ENCODE measurements at regions of chr3 and their contacts with region 1.

Region 1: DNA sequence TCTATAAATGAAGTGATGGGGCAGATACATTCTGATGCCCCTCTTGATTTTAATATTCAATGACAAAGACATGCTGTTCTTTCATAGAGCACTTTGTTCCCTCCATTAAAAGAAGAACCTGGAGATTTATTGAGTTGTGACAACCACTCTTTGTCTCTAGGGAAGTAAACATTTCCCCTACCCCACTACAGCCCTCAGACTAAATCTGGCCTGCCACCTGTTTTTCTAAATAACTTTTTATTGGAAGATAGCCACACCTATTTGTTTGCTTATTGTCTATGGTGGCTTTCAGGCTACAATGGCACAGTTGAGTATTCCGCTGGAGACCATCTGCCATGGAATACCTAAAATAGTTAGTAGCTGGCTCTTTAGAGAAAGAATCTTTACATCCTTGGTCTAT is 41.2 kb upstream of the ZNF385D start:
- DNase-seq: no peak
- ATAC-seq: no peak
- H3K4me3 ChIP-seq: no peak overlapping the region
- H3K27ac ChIP-seq: peak overlapping the region in 1 of 2 donors; percentile 57
- H3K4me1 ChIP-seq: peaks cover 2 to 5% of the 10 kb centered on the region in 2 donors
- H3K27me3 ChIP-seq: no peaks in the 10 kb centered on the region

Region 2: DNA sequence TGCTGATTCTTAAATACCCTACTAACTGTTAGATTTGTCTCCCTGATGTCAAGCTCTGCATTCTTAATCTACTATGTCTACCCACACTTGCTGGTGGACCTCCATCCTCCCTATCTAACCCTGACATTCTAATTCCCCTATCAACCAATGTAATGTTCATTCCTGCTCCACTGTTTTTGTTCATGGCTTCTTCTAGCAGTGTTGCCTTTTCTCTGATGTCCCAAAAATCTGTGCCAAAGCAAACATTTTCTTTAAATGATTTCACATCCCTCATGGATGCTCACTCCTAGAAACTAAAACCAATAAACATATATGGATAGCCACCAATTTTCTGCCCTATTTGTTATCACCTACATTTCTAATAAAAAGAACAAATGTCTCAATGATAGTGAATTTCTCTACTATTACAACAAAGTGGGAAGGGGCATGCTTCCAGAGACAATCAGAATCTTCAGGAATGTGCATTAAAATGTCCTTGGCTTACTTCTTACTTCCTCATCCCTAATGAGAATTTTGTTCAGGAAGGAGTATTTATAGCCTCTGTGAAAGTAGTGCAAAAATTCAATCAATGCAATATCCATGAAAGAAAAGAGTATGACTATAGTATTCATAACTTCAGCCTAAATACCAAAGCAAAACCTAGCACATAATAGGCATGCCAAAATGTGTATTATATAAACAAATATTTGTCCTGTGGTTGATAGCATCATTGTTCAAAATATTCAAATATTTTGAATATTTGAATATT is 314.5 kb before region 1 on chr3:
- intact Hi-C with region 1: no loop called
- DNase-seq: no peak
- ATAC-seq: no peak
- H3K4me3 ChIP-seq: no peak overlapping the region
- H3K27ac ChIP-seq: no peak overlapping the region
- H3K4me1 ChIP-seq: peaks cover 0 to 8% of the 10 kb centered on the region in 2 donors
- H3K27me3 ChIP-seq: no peaks in the 10 kb centered on the region

Region 3: DNA sequence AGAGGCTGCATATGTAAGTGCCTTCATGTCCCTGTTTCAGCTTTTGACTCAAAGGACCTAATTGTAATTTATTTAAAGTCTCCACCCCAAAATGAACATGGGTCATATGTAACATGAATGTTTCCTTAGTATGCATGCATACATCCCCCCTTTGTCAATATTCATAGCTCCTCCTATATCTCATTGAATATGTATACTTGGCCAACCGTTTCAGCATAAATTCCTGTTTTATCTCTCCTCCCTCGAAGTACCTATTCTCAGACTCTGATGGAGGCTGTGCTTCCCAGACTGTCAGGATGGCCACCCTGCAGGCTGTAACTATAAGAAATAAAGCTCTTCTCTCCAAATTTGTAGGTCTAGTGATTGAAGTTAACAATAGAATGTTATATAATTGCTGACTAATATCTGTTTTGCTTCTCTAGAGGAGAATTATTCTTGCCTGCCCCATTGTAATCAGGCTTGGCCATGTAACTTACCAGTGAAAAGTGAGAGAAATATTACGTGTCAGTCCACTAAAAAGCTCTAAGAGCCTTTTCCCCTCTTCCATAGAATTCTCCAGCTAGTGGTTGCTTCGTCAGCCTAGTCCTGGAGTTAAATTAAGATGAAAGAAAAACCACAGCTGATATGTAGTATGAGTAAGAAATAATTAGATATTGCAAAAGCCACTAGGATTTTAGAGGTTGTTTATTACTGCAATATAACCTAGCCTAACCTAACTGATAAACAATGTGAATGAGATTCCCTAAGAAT is 286.3 kb before region 1 on chr3:
- intact Hi-C with region 1: no loop called
- DNase-seq: no peak
- ATAC-seq: no peak
- H3K4me3 ChIP-seq: no peak overlapping the region
- H3K27ac ChIP-seq: no peak overlapping the region
- H3K4me1 ChIP-seq: peaks cover 1 to 2% of the 10 kb centered on the region in 2 donors
- H3K27me3 ChIP-seq: no peaks in the 10 kb centered on the region

Region 4: DNA sequence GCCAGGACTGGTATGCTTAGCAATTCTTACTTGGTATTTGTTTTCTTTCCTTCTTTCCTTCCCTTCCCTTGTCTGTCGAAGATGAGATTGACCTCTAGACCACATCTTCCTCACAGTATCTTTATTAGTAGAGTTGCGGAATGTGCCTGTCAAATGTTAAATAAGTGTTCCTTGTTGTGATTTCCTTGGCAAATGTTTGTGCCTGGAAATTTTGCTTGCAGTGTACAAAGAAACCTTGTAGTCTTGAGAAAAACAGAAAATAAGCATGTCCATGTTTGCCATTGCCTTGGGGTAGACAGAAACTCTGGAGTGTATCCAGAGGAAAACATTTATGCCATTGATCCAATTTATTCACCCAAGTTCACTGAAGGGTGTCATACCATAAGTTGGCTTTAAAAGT is 38.4 kb after region 1 on chr3:
- intact Hi-C with region 1: loop called in 1 of 2 experiments (anchors 5 kb)
- DNase-seq: no peak
- ATAC-seq: no peak
- H3K4me3 ChIP-seq: no peak overlapping the region
- H3K27ac ChIP-seq: no peak overlapping the region
- H3K4me1 ChIP-seq: no peaks in the 10 kb centered on the region
- H3K27me3 ChIP-seq: no peaks in the 10 kb centered on the region

Region 5: DNA sequence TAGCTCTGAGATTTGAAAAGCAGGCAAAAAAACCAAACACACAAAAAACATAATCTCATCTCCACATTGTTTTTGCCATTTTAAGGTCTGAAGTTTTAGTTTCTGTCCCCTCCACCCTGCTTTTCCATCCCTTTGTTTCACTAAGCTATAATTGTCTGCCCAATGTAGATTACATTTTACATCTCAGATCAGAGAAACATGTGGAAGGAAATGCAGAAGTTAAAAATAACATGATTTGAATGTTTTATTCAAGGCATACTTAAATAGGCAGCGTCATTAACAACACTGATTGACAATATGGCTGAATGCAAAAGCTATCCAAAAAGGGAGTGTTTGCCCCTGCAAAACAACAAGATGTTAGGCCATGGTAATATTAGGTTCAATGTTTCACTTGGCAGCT is 406.9 kb after region 1 on chr3:
- intact Hi-C with region 1: no loop called
- DNase-seq: no peak
- ATAC-seq: no peak
- H3K4me3 ChIP-seq: no peak overlapping the region
- H3K27ac ChIP-seq: no peak overlapping the region
- H3K4me1 ChIP-seq: no peaks in the 10 kb centered on the region
- H3K27me3 ChIP-seq: no peaks in the 10 kb centered on the region

Measured in aorta (tissue), 5 donors.